Mammary epithelial cell (primary cell): ENCODE measurements at regions of chrX and their contacts with region 1.

Region 1: DNA sequence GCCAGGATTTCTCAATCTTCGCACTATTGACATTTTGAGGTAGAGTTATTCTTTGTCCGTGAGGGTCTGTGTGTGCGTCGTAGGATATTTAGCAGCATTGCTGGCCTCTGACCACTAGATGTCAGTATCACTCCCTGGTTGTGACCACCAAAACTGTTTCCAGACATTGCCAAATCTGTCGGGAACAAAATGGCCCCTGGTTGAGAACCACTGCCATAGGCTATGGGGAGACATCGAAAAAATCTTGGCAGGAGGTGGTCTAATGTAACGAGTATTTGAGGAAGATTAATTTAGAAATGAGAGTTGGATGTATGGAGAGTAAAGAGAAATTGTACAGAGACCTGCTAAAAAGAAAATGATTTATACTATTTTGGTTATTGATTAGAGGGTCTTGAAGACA is 108.4 kb downstream of the DOCK11 start:
- DNase-seq: peak; percentile 39
- H3K4me3 ChIP-seq: no peak overlapping the region
- H3K27ac ChIP-seq: no peak overlapping the region
- H3K4me1 ChIP-seq: no peaks in the 10 kb centered on the region
- H3K27me3 ChIP-seq: no peaks in the 10 kb centered on the region
- CTCF ChIP-seq: peak; percentile 83 to 84

Region 2: DNA sequence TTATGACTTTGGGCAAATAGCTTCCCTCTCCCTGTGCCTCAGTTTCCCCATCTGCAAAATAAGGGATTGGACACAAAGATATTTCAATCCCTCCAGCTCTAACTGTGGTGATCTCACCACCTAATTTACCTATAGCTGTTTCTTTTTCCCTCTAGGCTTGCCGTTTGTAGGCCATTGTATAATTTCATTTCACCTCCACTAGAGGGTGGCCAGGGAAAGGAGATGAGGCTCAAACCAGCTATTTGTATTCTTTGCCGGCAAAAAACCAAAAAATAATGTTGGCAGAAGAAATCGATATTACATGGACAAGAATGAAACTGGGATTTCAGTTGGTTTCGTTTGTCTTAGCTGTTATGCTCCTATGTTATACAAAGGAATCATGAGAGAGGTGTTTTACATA is 144.5 kb before region 1 on chrX:
- CTCF ChIA-PET with region 1: interaction called, 17 read pairs
- dilution Hi-C with region 1: no loop called
- in situ Hi-C with region 1: loop called in 1 of 2 experiments (anchors 25 kb)
- intact Hi-C with region 1: loop called (anchors 1 kb)
- DNase-seq: peak; percentile 12
- H3K4me3 ChIP-seq: no peak overlapping the region
- H3K27ac ChIP-seq: no peak overlapping the region
- H3K4me1 ChIP-seq: no peaks in the 10 kb centered on the region
- H3K27me3 ChIP-seq: no peaks in the 10 kb centered on the region
- CTCF ChIP-seq: peak; percentile 48 to 60

Region 3: DNA sequence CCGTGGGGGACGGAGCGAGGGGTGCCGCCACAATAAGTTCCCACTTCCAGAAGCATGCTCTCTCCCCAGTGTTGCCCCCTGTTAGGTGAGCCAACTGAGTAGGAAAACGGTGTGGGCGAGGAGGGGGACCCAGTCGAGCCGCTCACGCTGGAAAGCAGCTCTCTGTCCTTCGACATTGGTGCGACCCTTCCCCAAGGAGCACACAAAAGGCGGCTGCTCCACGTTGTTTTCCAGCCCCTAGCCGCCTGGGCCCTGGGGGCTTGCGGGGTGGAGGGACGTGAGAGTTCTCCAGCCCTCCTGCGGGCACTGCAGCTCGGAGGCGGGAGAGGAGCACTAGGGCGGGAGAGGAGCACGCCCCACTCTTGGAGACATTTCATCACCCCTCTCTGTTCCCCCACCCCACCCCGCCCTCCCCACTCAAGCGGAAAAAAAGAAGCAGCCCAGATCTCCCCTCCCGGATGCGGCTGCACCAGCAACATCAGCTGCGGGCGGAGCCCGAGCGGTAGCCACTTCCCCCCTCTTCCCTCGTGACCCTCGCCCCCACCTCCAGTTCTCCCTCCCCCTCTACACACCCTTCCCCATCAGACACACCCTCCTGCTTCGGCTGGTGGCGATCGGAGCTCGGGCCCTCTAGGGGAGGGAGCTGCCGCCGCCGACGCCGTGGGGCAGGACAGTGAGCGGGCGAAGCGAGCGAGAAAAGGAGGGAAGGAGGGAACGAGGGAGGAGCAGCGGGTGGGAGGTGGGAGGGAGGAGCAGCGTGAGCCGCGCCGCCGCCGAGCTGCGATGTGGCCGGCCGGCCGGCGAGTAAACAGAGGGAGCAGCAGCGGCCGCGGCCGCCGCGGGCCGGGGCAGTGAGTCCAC is 108.7 kb before region 1 on chrX and contains the start of gene DOCK11:
- CTCF ChIA-PET with region 1: no interaction called
- dilution Hi-C with region 1: no loop called
- in situ Hi-C with region 1: no loop called
- intact Hi-C with region 1: loop called (anchors 5 kb)
- DNase-seq: peak; percentile 48
- H3K4me3 ChIP-seq: peak within 1 kb of the TSS; percentile 58 to 62 (median 60)
- H3K27ac ChIP-seq: no peak within 1 kb of the TSS
- H3K4me1 ChIP-seq: no peaks in the 10 kb centered on the region
- H3K27me3 ChIP-seq: no peaks in the 10 kb centered on the region
- CTCF ChIP-seq: no peak
- total RNA-seq, gene DOCK11: 1.3 to 4.4 TPM

Region 4: GRCh38 chrX:118621081-118621759 is 17.2 kb after region 1 on chrX:
- CTCF ChIA-PET with region 1: interaction called, 20 read pairs
- dilution Hi-C with region 1: no loop called
- in situ Hi-C with region 1: no loop called
- intact Hi-C with region 1: no loop called
- DNase-seq: no peak
- H3K4me3 ChIP-seq: no peak overlapping the region
- H3K27ac ChIP-seq: no peak overlapping the region
- H3K4me1 ChIP-seq: no peaks in the 10 kb centered on the region
- H3K27me3 ChIP-seq: no peaks in the 10 kb centered on the region
- CTCF ChIP-seq: no peak

Region 5: GRCh38 chrX:118655561-118656246 is 51.7 kb after region 1 on chrX:
- CTCF ChIA-PET with region 1: no interaction called
- dilution Hi-C with region 1: no loop called
- in situ Hi-C with region 1: no loop called
- intact Hi-C with region 1: no loop called
- DNase-seq: peak; percentile 58
- H3K4me3 ChIP-seq: no peak overlapping the region
- H3K27ac ChIP-seq: no peak overlapping the region
- H3K4me1 ChIP-seq: no peaks in the 10 kb centered on the region
- H3K27me3 ChIP-seq: no peaks in the 10 kb centered on the region
- CTCF ChIP-seq: no peak

Region 6: GRCh38 chrX:118726887-118727739 is 123.1 kb after region 1 on chrX and contains the start of gene IL13RA1:
- CTCF ChIA-PET with region 1: no interaction called
- dilution Hi-C with region 1: no loop called
- in situ Hi-C with region 1: no loop called
- intact Hi-C with region 1: no loop called
- DNase-seq: peak; percentile 84
- H3K4me3 ChIP-seq: peak within 1 kb of the TSS; percentile 53 to 67 (median 57)
- H3K27ac ChIP-seq: peak within 1 kb of the TSS; percentile 53
- H3K4me1 ChIP-seq: peaks cover 19% of the 10 kb centered on the region
- H3K27me3 ChIP-seq: no peaks in the 10 kb centered on the region
- CTCF ChIP-seq: no peak
- total RNA-seq, gene IL13RA1: 36.0 to 56.8 TPM

Region 7: GRCh38 chrX:118807151-118808017 is 203.4 kb after region 1 on chrX:
- CTCF ChIA-PET with region 1: no interaction called
- dilution Hi-C with region 1: no loop called
- in situ Hi-C with region 1: no loop called
- intact Hi-C with region 1: loop called (anchors 1 kb)
- DNase-seq: peak; percentile 29
- H3K4me3 ChIP-seq: no peak overlapping the region
- H3K27ac ChIP-seq: no peak overlapping the region
- H3K4me1 ChIP-seq: no peaks in the 10 kb centered on the region
- H3K27me3 ChIP-seq: peaks cover 2% of the 10 kb centered on the region
- CTCF ChIP-seq: peak; percentile 69 to 78

Region 8: GRCh38 chrX:119004920-119005524 is 401.0 kb after region 1 on chrX:
- CTCF ChIA-PET with region 1: no interaction called
- dilution Hi-C with region 1: no loop called
- in situ Hi-C with region 1: no loop called
- intact Hi-C with region 1: loop called (anchors 5 kb)
- DNase-seq: peak; percentile 14
- H3K4me3 ChIP-seq: no peak overlapping the region
- H3K27ac ChIP-seq: no peak overlapping the region
- H3K4me1 ChIP-seq: no peaks in the 10 kb centered on the region
- H3K27me3 ChIP-seq: no peaks in the 10 kb centered on the region
- CTCF ChIP-seq: peak; percentile 94 to 97